ENCODE measurements at regions of chr3 and their contacts with region 1.

Region 1: GRCh38 chr3:105118905-105119304 is 247.8 kb upstream of the ALCAM start:
- DNase-seq: peak; percentile 75
- H3K4me3 Mint-ChIP-seq: no peak overlapping the region
- H3K27ac Mint-ChIP-seq: no peak overlapping the region
- H3K4me1 Mint-ChIP-seq: peaks cover 6% of the 10 kb centered on the region
- H3K27me3 Mint-ChIP-seq: no peaks in the 10 kb centered on the region
- CTCF ChIP-seq: no peak

Region 2: GRCh38 chr3:104878395-104878794 is 240.5 kb before region 1 on chr3:
- CTCF ChIA-PET with region 1: no interaction called
- POLR2A ChIA-PET with region 1: no interaction called
- intact Hi-C with region 1: no loop called
- DNase-seq: no peak
- H3K4me3 Mint-ChIP-seq: no peak overlapping the region
- H3K27ac Mint-ChIP-seq: no peak overlapping the region
- H3K4me1 Mint-ChIP-seq: no peaks in the 10 kb centered on the region
- H3K27me3 Mint-ChIP-seq: no peaks in the 10 kb centered on the region
- CTCF ChIP-seq: no peak

Region 3: GRCh38 chr3:105051111-105051510 is 67.8 kb before region 1 on chr3:
- CTCF ChIA-PET with region 1: no interaction called
- POLR2A ChIA-PET with region 1: no interaction called
- intact Hi-C with region 1: loop called (anchors 2 kb)
- DNase-seq: no peak
- H3K4me3 Mint-ChIP-seq: no peak overlapping the region
- H3K27ac Mint-ChIP-seq: no peak overlapping the region
- H3K4me1 Mint-ChIP-seq: no peaks in the 10 kb centered on the region
- H3K27me3 Mint-ChIP-seq: no peaks in the 10 kb centered on the region
- CTCF ChIP-seq: no peak

Measured in MCF 10A (cell line).